ENCODE measurements at regions of chr2 and their contacts with region 1.

Region 1: DNA sequence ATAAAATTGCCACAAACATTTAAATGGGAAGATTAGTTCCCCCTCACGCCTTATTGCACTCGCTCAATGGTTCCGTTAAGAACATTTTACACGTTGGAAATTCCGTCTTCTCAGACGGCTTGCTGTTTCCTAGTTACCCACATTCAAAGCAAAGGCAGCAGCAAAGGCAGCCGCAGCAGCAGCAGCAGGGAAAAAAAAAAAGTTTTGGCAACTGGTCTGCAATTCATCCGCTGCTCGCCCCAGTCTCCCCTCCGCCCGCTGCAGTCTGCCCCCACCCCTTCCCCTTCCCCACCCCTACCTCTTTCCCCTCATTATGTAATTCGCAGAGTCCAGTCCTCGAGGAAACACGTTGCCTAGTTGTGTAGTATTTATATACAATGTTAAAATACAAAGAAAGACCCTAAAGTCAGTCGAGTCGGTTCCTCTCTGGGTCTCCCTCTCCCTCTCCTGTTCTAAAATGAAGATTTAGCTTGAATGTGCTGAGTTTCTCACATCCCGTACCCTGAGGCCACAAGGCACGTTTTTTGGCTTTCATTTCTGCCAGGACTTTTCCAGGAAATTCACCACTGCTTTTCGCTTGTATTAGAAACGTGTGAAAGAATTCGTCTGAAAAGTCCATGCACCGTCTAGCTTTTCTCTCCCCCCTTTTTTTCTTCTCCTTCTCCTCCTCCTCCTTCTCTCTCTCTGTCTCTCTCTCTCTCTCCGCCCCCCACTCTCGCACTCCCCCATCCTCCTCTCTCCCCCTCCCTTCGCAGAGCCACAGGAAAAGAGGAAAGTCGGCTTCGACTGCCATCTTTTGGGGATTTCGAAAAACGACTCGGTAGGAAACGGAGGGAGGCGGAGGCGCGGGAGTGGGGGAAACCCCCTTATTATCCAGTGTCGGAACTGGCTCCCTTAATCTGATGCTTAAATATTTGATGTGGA is 140.0 kb downstream of the MEIS1 start:
- DNase-seq: peak; percentile 77
- ATAC-seq: peak; percentile 65
- H3K4me3 ChIP-seq: peak overlapping the region; percentile 76
- H3K27ac ChIP-seq: no peak overlapping the region
- H3K4me1 ChIP-seq: peaks cover 17% of the 10 kb centered on the region
- H3K27me3 ChIP-seq: peaks cover 37% of the 10 kb centered on the region
- CTCF ChIP-seq: peak; percentile 84

Region 2: GRCh38 chr2:65647249-65647842 is 927.6 kb before region 1 on chr2:
- CTCF ChIA-PET with region 1: no interaction called
- POLR2A ChIA-PET with region 1: no interaction called
- intact Hi-C with region 1: loop called (anchors 10 kb)
- DNase-seq: no peak
- ATAC-seq: no peak
- H3K4me3 ChIP-seq: no peak overlapping the region
- H3K27ac ChIP-seq: no peak overlapping the region
- H3K4me1 ChIP-seq: no peaks in the 10 kb centered on the region
- H3K27me3 ChIP-seq: no peaks in the 10 kb centered on the region
- CTCF ChIP-seq: no peak

Region 3: GRCh38 chr2:66434679-66435548 is 140.0 kb before region 1 on chr2 and contains the start of gene MEIS1:
- CTCF ChIA-PET with region 1: interaction called, 3 read pairs
- POLR2A ChIA-PET with region 1: interaction called, 5 read pairs
- intact Hi-C with region 1: loop called (anchors 1 kb)
- DNase-seq: peak; percentile 90
- ATAC-seq: peak; percentile 77
- H3K4me3 ChIP-seq: peak within 1 kb of the TSS; percentile 91
- H3K27ac ChIP-seq: peak within 1 kb of the TSS; percentile 55
- H3K4me1 ChIP-seq: no peaks in the 10 kb centered on the region
- H3K27me3 ChIP-seq: no peaks in the 10 kb centered on the region
- CTCF ChIP-seq: no peak
- total RNA-seq, gene MEIS1: 4.1 and 5.9 TPM in 2 replicates

Region 4: GRCh38 chr2:66461664-66462500 is 113.1 kb before region 1 on chr2:
- CTCF ChIA-PET with region 1: no interaction called
- POLR2A ChIA-PET with region 1: no interaction called
- intact Hi-C with region 1: no loop called
- DNase-seq: no peak
- ATAC-seq: no peak
- H3K4me3 ChIP-seq: no peak overlapping the region
- H3K27ac ChIP-seq: no peak overlapping the region
- H3K4me1 ChIP-seq: peaks cover under 1% of the 10 kb centered on the region
- H3K27me3 ChIP-seq: no peaks in the 10 kb centered on the region
- CTCF ChIP-seq: no peak

Region 5: GRCh38 chr2:66508484-66509071 is 66.4 kb before region 1 on chr2:
- CTCF ChIA-PET with region 1: no interaction called
- POLR2A ChIA-PET with region 1: interaction called, 22 read pairs
- intact Hi-C with region 1: no loop called
- DNase-seq: no peak
- ATAC-seq: no peak
- H3K4me3 ChIP-seq: no peak overlapping the region
- H3K27ac ChIP-seq: no peak overlapping the region
- H3K4me1 ChIP-seq: peaks cover 9% of the 10 kb centered on the region
- H3K27me3 ChIP-seq: no peaks in the 10 kb centered on the region
- CTCF ChIP-seq: no peak

Region 6: GRCh38 chr2:66699793-66700676 is 125.1 kb after region 1 on chr2:
- CTCF ChIA-PET with region 1: no interaction called
- POLR2A ChIA-PET with region 1: no interaction called
- intact Hi-C with region 1: no loop called
- DNase-seq: peak; percentile 44
- ATAC-seq: peak; percentile 31; the same call in 1 of the 2 replicates
- H3K4me3 ChIP-seq: no peak overlapping the region
- H3K27ac ChIP-seq: no peak overlapping the region
- H3K4me1 ChIP-seq: peaks cover 14% of the 10 kb centered on the region
- H3K27me3 ChIP-seq: peaks cover 86% of the 10 kb centered on the region
- CTCF ChIP-seq: no peak

Region 7: DNA sequence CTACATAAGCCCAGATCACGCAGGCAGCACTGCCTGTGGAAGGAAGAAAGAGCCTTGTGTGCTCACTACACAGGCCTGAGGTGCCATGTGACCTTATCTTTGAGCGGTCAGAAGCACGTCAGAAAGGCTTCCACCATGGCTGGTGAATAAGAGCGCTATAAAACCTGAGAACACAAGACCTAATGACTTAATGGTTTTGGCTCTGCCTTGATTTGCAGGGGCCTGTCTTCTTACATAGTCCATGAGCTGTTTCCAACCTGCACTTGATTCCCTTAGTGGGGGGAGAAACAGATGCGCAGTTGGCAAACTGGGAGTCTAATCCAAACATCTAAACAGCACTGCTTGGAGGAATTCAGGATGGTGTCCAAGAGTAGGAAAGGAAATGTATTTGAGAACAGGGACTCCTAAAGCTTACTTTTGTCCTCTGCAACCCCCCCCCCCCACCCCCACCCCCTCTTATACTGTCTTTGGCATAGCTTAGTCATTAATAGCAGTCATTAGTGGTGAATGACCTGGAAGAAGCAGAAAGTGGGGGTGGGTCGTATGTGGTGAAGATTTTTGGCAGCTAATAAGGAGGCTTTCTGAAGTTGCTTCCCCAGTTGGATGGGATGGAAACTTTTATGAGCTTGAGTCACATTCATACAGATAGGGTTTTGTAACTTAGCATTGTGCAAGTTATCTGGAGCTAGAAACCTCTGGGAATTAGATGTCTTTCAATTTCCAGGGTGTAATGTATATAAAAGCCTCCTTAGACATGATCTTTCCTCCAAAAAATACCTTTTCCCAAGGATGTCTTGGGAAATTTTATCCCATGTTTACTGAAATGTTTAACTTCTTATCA is 314.0 kb after region 1 on chr2:
- CTCF ChIA-PET with region 1: no interaction called
- POLR2A ChIA-PET with region 1: no interaction called
- intact Hi-C with region 1: no loop called
- DNase-seq: peak; percentile 93
- ATAC-seq: no peak; the same call in 1 of the 2 replicates
- H3K4me3 ChIP-seq: no peak overlapping the region
- H3K27ac ChIP-seq: peak overlapping the region; percentile 99
- H3K4me1 ChIP-seq: peaks cover 35% of the 10 kb centered on the region
- H3K27me3 ChIP-seq: no peaks in the 10 kb centered on the region
- CTCF ChIP-seq: no peak

Region 8: DNA sequence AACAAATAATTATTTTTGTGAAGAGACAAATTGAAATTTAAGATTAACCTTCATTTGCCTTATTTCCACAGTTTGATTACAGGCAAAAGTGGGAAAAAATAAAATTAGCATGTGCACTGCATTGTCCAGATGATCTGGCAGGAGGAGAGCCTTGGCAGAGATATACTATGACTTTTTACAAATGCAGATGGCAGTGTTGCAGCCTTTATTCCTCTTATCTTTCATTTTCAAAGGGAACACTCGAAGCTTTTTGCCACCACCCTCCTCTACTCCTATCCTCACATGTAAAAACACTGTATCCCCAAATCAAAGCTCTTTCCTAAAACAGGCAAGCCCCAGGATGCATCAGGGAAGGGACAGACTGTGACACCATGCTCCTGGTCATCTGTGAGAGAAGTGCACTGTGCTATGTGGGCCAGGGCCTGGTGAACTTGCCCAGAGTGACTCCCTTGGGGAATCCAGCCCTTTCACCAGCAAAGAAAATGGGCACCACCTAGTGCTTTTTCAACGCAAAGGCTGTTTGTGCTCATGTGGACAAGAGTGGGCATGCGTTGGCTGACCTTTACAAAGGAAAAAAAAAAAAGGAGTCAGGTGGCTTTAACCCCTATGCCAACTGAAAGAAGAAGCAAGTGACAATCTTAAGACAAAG is 747.5 kb after region 1 on chr2:
- CTCF ChIA-PET with region 1: no interaction called
- POLR2A ChIA-PET with region 1: no interaction called
- intact Hi-C with region 1: loop called (anchors 5 kb)
- DNase-seq: peak; percentile 79
- ATAC-seq: peak; percentile 93
- H3K4me3 ChIP-seq: no peak overlapping the region
- H3K27ac ChIP-seq: peak overlapping the region; percentile 44
- H3K4me1 ChIP-seq: no peaks in the 10 kb centered on the region; the same call in 1 of the 2 replicates
- H3K27me3 ChIP-seq: no peaks in the 10 kb centered on the region
- CTCF ChIP-seq: peak; percentile 88

Region 9: DNA sequence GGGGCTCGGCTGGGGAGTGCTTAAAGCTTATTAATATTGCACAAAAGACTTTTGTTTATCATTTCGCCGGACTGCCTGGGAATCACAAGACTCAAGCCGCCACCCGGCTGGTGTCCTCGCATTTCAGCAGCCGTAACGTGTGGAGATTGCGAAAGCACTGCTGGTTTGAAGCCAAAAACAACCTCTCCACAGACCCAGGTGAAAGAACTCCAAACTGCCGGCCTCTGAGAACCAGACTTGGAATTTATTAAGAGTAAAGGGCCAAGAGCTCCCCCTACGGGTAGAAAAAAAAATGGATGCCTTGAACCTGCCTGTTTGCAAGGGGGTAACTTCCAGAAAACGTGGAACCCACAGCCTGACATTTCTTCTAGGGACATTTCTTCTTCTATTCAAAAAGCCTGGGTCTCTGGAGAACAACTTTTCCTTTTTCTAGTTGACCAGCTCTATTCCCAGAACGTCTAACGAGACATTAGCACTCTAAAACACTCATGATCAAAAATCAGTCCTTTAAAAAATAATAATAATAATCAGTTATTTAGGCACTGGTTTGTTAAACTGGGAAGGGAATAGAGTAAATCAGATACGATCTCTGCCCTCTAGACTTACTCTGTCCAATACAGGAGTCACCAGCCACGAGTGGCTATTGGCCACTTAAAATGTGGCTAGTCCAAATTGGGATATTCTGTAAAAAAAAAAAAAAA is 1271.6 kb after region 1 on chr2:
- CTCF ChIA-PET with region 1: no interaction called
- POLR2A ChIA-PET with region 1: no interaction called
- intact Hi-C with region 1: loop called (anchors 5 kb)
- DNase-seq: peak; percentile 98
- ATAC-seq: peak; percentile 71
- H3K4me3 ChIP-seq: peak overlapping the region; percentile 51
- H3K27ac ChIP-seq: 0 out of 2 replicates have a peak overlapping the region, but pooled peaks have one; percentile 2
- H3K4me1 ChIP-seq: peaks cover 8% of the 10 kb centered on the region
- H3K27me3 ChIP-seq: no peaks in the 10 kb centered on the region
- CTCF ChIP-seq: peak; percentile 87

Measured in PC-3 (cell line).